Psoas muscle (tissue), 8 donors: ENCODE measurements at regions of chr22 and their contacts with region 1.

Region 1: GRCh38 chr22:29635734-29636357 is 32.4 kb downstream of the NF2 start:
- DNase-seq: no peak
- ATAC-seq: peak in 3 of 4 donors; percentile 67 to 83 (median 74)
- H3K4me3 ChIP-seq: no peak overlapping the region
- H3K27ac ChIP-seq: no peak overlapping the region
- H3K4me1 ChIP-seq: no peaks in the 10 kb centered on the region
- H3K27me3 ChIP-seq: no peaks in the 10 kb centered on the region
- CTCF ChIP-seq: peak; percentile 62

Region 2: DNA sequence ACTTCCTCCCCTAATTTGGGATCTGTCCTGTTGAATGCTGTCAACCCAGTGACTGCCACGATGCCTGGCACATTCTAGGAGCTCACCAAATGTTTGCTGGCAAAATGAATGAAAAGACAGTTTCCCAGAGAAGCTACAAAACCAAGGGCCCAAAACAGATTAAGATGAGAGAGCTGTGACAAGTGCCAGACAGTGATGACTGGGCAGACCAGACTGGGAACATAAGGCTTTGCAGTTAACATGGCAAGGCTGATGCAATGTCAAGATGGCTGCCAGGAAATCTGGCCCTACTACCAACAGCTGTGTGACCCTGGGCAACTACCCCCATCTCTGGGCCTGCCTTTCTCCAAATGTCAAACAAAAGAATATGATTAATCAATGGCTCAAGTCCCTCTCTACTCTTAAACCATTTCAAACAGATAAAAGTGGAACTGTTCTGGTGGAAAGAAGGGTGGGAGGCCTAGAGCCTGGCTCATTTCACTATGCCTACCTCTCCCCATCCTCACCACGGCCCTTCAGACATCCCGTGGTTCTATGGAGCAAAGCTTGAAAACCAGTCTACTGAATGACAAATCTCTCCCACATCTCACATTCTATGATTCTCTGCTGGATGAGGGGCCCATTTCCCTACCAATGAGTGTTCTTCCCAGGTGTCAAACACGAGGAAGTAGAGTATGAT is 260.3 kb before region 1 on chr22:
- intact Hi-C with region 1: no loop called
- DNase-seq: peak; percentile 56 to 72
- ATAC-seq: peak; percentile 78 to 94 (median 90)
- H3K4me3 ChIP-seq: no peak overlapping the region
- H3K27ac ChIP-seq: peak overlapping the region; percentile 65
- H3K4me1 ChIP-seq: peaks cover 29% of the 10 kb centered on the region
- H3K27me3 ChIP-seq: no peaks in the 10 kb centered on the region
- CTCF ChIP-seq: no peak

Region 3: GRCh38 chr22:30015846-30016245 is 380.0 kb after region 1 on chr22:
- intact Hi-C with region 1: loop called in 1 of 2 experiments (anchors 10 kb)
- DNase-seq: no peak
- ATAC-seq: peak in 1 of 4 donors; percentile 40
- H3K4me3 ChIP-seq: no peak overlapping the region
- H3K27ac ChIP-seq: no peak overlapping the region
- H3K4me1 ChIP-seq: no peaks in the 10 kb centered on the region
- H3K27me3 ChIP-seq: no peaks in the 10 kb centered on the region
- CTCF ChIP-seq: no peak

Region 4: GRCh38 chr22:30089655-30089974 is 453.8 kb after region 1 on chr22:
- intact Hi-C with region 1: loop called (anchors 5 kb)
- DNase-seq: no peak
- ATAC-seq: peak in 1 of 4 donors; percentile 15
- H3K4me3 ChIP-seq: no peak overlapping the region
- H3K27ac ChIP-seq: no peak overlapping the region
- H3K4me1 ChIP-seq: no peaks in the 10 kb centered on the region
- H3K27me3 ChIP-seq: peaks cover 0 to 9% (median 0%) of the 10 kb centered on the region in 3 donors
- CTCF ChIP-seq: no peak

Region 5: GRCh38 chr22:30094804-30095203 is 459.0 kb after region 1 on chr22:
- intact Hi-C with region 1: loop called in 1 of 2 experiments (anchors 5 kb)
- DNase-seq: no peak
- ATAC-seq: no peak
- H3K4me3 ChIP-seq: no peak overlapping the region
- H3K27ac ChIP-seq: no peak overlapping the region
- H3K4me1 ChIP-seq: no peaks in the 10 kb centered on the region
- H3K27me3 ChIP-seq: peaks cover 0 to 17% (median 0%) of the 10 kb centered on the region in 3 donors
- CTCF ChIP-seq: no peak